ENCODE measurements at regions of chr18 and their contacts with region 1.

Region 1: DNA sequence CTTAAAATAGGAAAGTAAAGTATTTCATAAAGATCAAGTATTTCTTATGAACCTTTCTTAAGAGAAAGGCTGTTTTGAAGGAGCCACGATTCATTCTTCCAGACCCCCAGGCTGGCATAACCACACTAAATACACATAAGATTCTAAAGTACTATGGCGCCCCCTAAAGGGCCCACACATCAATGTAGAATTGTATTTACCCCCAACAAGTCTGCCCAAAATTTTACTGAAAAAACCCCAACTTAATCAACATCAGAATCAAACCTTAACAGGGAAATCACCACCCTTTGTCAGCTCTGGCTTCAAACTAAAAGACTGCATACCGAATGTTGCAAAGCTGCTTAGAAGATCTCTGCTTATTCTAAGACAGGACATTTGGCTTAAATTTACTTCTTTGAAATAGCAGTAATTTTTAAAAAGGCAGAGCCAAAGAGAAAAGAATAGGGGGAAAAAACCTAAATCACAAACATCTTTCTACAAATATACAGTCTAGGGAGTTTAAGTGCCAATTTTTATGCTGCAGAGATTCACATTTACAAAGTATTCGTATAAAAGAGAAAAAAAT is 20.4 kb upstream of the BCL2 start:
- DNase-seq: no peak
- CTCF ChIP-seq: peak; percentile 9

Region 2: DNA sequence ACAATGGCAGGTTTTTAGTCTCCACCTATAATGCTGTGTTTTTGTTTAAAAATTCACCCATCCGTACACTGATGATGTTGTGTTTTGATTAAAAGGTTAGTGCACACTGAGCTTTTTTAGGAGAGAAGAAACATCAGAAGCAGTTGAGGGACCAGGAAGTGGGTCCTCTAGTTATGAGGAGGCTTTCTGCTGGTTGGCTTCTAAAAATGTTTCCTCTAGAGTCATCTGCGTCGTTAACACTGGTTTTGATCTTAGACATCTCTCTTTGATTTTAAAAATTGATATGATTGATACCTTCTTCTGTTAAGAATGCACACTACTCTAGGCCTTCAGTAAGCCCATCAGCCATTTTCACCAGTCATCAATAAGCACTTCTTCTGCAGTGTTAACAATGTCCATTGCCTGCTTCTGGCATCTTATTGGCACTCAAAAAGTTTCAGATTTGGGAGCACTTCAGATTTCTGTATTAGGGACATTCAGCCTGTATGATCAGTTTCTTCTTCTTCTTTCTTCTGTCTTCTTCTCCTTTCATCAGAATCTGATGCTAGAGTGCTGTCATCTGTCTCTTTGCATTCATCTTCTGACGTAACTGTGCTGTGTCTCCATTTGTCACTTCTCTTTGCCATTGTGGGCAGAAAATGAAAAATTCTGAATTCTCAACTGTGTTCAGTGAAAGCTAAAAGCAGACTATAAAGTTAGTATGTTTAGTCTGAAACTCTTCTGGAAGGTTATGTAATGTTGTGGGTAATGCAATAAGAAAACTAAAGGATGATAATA is 568.3 kb before region 1 on chr18:
- in situ Hi-C with region 1: no loop called
- DNase-seq: peak; percentile 34
- CTCF ChIP-seq: no peak

Region 3: GRCh38 chr18:63422087-63422809 is 82.2 kb after region 1 on chr18 and contains the start of gene VPS4B:
- in situ Hi-C with region 1: loop called (anchors 10 kb)
- DNase-seq: peak; percentile 99
- CTCF ChIP-seq: no peak

Region 4: GRCh38 chr18:63725682-63726480 is 385.9 kb after region 1 on chr18:
- in situ Hi-C with region 1: no loop called
- DNase-seq: no peak
- CTCF ChIP-seq: no peak